Activated CD4-positive, alpha-beta T cell treated with anti-CD3 and anti-CD28 coated beads for 36 hours (primary cell): ENCODE measurements at regions of chr15 and their contacts with region 1.

Region 1: GRCh38 chr15:42920519-42921227 is at the start of gene TTBK2:
- DNase-seq: peak; percentile 98
- ATAC-seq: peak; percentile 95
- H3K4me3 Mint-ChIP-seq: peak within 1 kb of the TSS; percentile 96
- H3K27ac Mint-ChIP-seq: peak within 1 kb of the TSS; percentile 96
- H3K4me1 Mint-ChIP-seq: peaks cover 26% of the 10 kb centered on the region
- H3K27me3 Mint-ChIP-seq: no peaks in the 10 kb centered on the region
- total RNA-seq, gene TTBK2: 9.7 to 10.5 TPM

Region 2: GRCh38 chr15:42194502-42194901 is 726.2 kb before region 1 on chr15:
- CTCF ChIA-PET with region 1: no interaction called
- POLR2A ChIA-PET with region 1: no interaction called
- intact Hi-C with region 1: loop called in 1 of 2 experiments (anchors 5 kb)
- DNase-seq: peak; percentile 37
- ATAC-seq: peak; percentile 24
- H3K4me3 Mint-ChIP-seq: no peak overlapping the region
- H3K27ac Mint-ChIP-seq: peak overlapping the region; percentile 93
- H3K4me1 Mint-ChIP-seq: peaks cover 55% of the 10 kb centered on the region
- H3K27me3 Mint-ChIP-seq: no peaks in the 10 kb centered on the region

Region 3: DNA sequence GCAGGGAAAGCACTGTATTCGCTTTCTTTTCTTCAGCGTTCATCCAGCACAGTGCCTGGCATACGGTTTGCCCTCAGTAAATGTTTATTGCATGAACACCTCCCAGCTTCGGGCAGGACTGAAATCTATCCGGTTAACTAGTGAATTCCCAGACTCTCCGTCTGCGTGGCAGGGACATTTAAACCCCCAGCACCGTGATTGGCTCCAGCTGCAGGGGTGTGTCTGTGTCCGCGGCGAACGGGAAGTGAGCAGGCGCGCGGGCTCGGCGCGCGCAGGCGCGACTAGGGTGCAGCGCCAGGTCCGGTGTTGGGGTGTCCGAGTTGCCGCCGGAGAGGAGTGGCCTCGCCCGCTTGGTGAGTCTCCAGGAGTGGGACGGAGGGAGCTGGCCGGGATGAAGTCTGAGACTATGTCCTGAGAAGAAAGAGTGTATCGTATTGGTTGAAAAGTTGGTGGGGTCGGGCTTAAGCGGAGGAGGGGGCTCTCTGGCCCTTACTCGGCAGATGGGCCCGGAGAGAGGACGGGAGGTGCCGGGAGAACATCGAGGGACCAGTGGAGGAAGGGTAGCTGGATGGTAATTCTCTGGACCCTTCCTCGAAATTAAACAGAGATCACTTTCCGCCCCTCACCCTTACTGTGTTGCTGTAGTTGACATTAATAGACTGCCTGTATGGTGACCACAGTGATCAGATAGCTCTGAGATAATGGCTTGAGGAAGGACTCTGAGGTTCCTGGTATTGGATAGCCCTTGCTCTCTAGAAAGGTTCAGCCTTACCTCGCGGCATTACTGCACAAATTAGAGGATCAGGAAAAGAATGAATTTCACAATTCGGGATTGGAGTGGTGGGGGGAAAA is 425.1 kb before region 1 on chr15 and contains the start of gene SNAP23:
- CTCF ChIA-PET with region 1: interaction called, 3 read pairs
- POLR2A ChIA-PET with region 1: no interaction called
- intact Hi-C with region 1: loop called in 1 of 2 experiments (anchors 2 kb)
- DNase-seq: peak; percentile 89
- ATAC-seq: peak; percentile 95
- H3K4me3 Mint-ChIP-seq: peak within 1 kb of the TSS; percentile 96
- H3K27ac Mint-ChIP-seq: peak within 1 kb of the TSS; percentile 97
- H3K4me1 Mint-ChIP-seq: peaks cover 68% of the 10 kb centered on the region
- H3K27me3 Mint-ChIP-seq: no peaks in the 10 kb centered on the region
- total RNA-seq, gene SNAP23: 45.5 to 77.5 TPM

Region 4: GRCh38 chr15:42736793-42737528 is 183.7 kb before region 1 on chr15 and contains the start of gene CDAN1:
- CTCF ChIA-PET with region 1: interaction called, 3 read pairs
- POLR2A ChIA-PET with region 1: interaction called, 3 read pairs
- intact Hi-C with region 1: loop called (anchors 1 kb)
- DNase-seq: peak; percentile 96
- ATAC-seq: peak; percentile 94
- H3K4me3 Mint-ChIP-seq: peak within 1 kb of the TSS; percentile 76
- H3K27ac Mint-ChIP-seq: peak within 1 kb of the TSS; percentile 61
- H3K4me1 Mint-ChIP-seq: peaks cover 16% of the 10 kb centered on the region
- H3K27me3 Mint-ChIP-seq: no peaks in the 10 kb centered on the region
- total RNA-seq, gene CDAN1: 12.9 to 16.6 TPM

Region 5: GRCh38 chr15:43105778-43106485 is 185.3 kb after region 1 on chr15 and contains the start of gene UBR1:
- CTCF ChIA-PET with region 1: no interaction called
- POLR2A ChIA-PET with region 1: no interaction called
- intact Hi-C with region 1: loop called in 1 of 2 experiments (anchors 1 kb)
- DNase-seq: peak; percentile 95
- ATAC-seq: peak; percentile 94
- H3K4me3 Mint-ChIP-seq: peak within 1 kb of the TSS; percentile 93
- H3K27ac Mint-ChIP-seq: peak within 1 kb of the TSS; percentile 96
- H3K4me1 Mint-ChIP-seq: peaks cover 41% of the 10 kb centered on the region
- H3K27me3 Mint-ChIP-seq: no peaks in the 10 kb centered on the region
- total RNA-seq, gene UBR1: 26.8 to 30.6 TPM

Region 6: GRCh38 chr15:43510200-43511011 is 589.7 kb after region 1 on chr15:
- CTCF ChIA-PET with region 1: no interaction called
- POLR2A ChIA-PET with region 1: no interaction called
- intact Hi-C with region 1: loop called in 1 of 2 experiments (anchors 2 kb)
- DNase-seq: peak; percentile 98
- ATAC-seq: peak; percentile 95
- H3K4me3 Mint-ChIP-seq: peak overlapping the region; percentile 91
- H3K27ac Mint-ChIP-seq: peak overlapping the region; percentile 90
- H3K4me1 Mint-ChIP-seq: peaks cover 32% of the 10 kb centered on the region
- H3K27me3 Mint-ChIP-seq: no peaks in the 10 kb centered on the region